Sciatic nerve (tissue), 2 donors: ENCODE measurements at regions of chr3 and their contacts with region 1.

Region 1: DNA sequence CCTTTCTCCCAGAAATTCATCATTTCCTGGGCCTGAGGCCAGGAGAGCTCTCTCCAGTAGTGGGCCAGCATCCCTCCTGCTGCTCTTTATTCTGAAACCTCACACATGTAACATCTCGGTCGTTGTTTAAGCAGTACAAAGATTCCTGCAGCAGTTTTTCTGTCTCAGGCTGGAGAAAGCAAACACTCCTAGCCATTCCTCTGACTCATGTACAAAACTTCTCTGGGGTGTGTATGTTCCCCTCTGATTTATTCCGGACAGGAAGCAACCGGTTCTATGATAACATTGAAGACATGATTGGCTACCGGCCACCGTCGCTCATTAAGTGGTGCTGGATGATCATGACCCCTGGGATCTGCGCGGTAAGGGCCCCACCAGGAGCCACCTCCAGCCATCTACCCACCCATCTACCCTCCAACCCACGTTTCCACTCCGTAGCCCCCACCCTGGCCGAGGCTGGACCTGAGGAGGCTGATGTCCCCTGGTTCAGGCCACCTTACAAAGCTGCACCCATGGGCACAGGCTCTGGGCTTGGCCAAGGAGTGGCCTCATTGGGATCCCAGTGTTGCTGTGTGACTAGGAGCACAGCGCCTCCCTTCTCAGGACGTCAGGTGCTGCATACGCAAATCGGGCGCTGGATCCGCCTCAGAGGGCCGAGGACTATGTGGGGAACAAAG is 58.6 kb upstream of the SLC6A1 start:
- DNase-seq: peak; percentile 63
- ATAC-seq: peak; percentile 76

Region 2: DNA sequence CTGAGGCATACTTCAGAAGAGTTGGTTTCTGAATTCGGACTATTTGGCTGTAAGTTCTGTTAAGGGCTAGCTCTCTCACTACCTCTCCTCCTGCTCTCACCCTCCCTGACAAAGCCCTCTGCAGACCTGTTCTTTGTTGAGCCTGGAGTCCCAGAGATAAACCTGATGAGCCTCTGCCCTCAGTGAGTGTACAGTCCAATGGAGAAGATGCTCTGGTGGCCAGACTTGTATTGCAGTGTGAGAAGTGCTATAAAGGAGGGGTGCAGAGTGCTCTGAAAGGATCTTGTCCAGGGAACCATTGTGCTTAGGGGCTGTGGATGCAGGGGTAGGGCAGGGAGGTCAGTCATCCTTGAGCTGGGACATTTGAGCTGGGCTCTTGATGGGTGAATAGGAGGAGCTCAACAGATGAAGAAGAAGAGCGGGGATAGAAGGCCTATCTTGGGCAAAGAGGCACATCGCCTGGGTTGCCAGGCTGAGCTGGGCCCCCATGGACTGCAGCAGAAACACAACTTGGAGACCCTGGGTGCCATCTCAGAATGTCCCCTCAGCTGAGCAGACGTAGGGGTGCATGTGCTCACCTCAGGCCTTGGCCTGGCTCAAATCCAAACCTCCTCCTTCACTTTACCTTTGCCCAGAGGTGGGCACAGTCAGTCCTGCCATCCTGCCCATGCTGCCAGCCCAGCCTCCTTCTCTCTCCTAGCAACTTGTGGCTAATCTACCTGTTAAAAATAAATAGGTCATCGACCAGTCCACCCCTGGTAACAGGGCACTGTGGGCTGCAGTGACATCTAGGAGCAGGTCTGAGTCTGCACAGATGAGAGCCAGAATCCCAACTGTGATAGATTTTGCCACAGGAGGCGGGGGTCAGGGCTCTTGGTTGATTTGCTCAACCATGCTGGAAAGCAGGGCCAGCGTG is 1865.8 kb after region 1 on chr3:
- intact Hi-C with region 1: loop called (anchors 5 kb)
- DNase-seq: no peak
- ATAC-seq: no peak